Activated naive CD4-positive, alpha-beta T cell treated with anti-CD3 and anti-CD28 coated beads for 36 hours (primary cell): ENCODE measurements at regions of chr16 and their contacts with region 1.

Region 1: DNA sequence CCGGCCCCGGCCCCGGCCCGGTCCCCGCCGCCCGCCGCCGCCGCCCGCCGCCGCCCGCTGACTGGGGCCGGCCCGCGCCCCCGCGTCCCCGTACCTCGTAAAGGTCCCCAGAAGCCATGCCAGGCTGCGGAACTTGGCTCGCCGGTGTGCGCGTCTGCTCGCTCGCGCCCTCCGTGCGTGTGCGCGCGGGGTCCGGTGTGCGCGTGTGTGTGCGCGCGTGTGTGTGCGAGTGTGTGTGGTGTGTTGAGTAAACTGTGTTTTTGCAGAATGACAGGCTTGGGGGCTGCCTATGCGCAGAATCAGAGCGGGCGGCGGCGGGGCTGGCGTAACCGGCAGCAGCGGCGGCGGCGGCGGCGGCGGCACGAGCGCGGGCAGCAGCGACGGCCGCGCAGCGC is 345 bp downstream of the CDYL2 start:
- DNase-seq: peak; percentile 63
- H3K4me3 Mint-ChIP-seq: peak overlapping the region; percentile 88
- H3K27ac Mint-ChIP-seq: peak overlapping the region; percentile 80
- H3K4me1 Mint-ChIP-seq: peaks cover 31% of the 10 kb centered on the region
- H3K27me3 Mint-ChIP-seq: peaks cover 4% of the 10 kb centered on the region

Region 2: DNA sequence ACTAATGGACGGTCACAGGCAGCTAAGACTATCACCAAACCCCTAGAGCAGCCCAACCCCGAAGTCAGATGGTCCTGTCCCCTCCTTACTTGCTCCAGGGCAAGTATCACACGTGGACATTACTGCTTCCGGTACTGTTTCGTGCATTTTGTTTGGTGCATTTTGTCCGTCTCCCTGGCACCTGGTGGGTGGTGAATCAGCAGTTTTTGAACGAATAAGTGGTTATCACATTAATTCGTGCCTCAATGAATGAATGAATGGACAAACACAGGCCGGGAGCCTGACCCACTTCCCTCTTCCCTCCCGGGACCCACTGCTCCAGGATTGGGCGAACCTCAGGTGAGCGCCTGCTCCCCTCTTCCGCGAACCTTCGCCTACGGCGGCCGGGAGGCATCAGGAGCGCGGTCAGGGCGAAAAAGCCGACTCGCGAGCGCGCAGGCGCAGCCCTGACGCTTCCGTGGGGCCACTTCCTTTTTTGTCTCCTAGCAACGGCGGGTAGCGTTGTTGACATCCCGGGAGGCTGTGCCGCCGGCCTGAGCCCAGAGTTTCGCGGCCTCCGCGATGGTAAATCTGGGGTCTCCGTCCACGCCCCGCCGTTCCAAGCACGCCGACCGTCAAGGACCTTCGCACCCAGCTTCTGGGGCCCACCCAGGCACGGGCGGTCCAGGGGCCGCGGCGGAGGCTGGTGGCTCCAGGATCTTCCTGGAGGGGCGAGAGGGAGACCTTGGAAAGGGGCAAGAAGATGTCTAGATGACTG is 263.4 kb before region 1 on chr16 and contains the start of gene DYNLRB2:
- CTCF ChIA-PET with region 1: no interaction called
- intact Hi-C with region 1: loop called (anchors 1 kb)
- DNase-seq: peak; percentile 94
- H3K4me3 Mint-ChIP-seq: peak within 1 kb of the TSS; percentile 95
- H3K27ac Mint-ChIP-seq: peak within 1 kb of the TSS; percentile 97
- H3K4me1 Mint-ChIP-seq: peaks cover 16% of the 10 kb centered on the region
- H3K27me3 Mint-ChIP-seq: no peaks in the 10 kb centered on the region
- total RNA-seq, gene DYNLRB2: not detected

Region 3: DNA sequence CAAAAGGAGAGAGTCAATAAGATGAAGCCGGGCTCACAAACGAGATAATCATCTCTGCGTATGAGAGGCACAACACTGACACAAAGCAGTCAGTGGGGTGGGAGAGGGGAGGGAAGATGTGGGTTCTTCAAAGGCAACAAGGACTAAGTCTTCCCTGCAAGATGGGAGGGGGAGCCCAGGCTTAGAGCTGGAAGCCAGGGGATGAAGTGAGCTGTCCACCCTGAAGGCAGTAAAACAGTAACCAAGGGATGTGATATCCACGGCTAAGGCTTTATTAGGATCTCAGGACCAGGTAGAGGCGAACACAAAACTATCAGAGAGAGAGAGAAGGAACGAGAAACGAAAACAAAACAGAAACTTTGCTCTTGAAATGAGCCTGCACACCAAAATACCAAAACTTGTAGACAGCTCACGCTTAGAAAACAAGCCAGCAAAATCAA is 147.3 kb before region 1 on chr16:
- CTCF ChIA-PET with region 1: no interaction called
- intact Hi-C with region 1: loop called (anchors 2 kb)
- DNase-seq: peak; percentile 49
- H3K4me3 Mint-ChIP-seq: peak overlapping the region; percentile 73
- H3K27ac Mint-ChIP-seq: peak overlapping the region; percentile 68
- H3K4me1 Mint-ChIP-seq: peaks cover 20% of the 10 kb centered on the region
- H3K27me3 Mint-ChIP-seq: no peaks in the 10 kb centered on the region

Region 4: DNA sequence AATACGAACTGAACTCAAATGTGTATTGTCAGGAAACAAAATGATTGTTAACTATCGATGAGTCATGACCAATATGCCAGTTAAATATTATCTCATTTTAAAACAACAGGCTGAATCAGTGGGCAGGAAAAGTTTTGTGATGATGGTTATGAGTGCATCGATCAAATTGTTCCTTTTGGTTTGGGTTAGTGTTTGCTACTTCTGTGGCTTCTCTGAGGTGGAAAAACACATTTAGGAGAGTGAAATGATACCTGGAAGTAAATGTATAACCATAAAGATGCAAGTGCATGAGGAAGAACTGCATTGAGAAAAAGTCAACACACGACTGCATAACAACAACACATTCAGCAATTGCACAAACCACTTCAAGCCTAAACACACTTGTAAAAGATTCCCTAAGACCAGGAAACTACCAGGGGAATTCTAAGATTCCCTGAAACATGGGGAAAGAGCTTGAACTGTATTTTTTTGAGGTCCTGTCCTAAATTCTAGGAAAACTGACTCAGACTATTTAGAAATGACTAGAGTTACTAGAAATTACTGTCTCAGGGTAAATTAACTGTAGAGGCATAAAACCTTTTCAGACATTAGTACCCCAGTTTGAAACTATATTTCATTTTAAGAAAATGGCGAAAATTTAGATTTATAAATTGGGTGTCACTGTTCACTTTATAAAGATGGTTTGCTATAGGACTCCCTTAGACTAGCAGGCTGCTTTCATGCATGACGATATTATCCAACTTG is 44.5 kb before region 1 on chr16:
- CTCF ChIA-PET with region 1: no interaction called
- intact Hi-C with region 1: loop called (anchors 1 kb)
- DNase-seq: no peak
- H3K4me3 Mint-ChIP-seq: no peak overlapping the region
- H3K27ac Mint-ChIP-seq: no peak overlapping the region
- H3K4me1 Mint-ChIP-seq: peaks cover 10% of the 10 kb centered on the region
- H3K27me3 Mint-ChIP-seq: no peaks in the 10 kb centered on the region

Region 5: DNA sequence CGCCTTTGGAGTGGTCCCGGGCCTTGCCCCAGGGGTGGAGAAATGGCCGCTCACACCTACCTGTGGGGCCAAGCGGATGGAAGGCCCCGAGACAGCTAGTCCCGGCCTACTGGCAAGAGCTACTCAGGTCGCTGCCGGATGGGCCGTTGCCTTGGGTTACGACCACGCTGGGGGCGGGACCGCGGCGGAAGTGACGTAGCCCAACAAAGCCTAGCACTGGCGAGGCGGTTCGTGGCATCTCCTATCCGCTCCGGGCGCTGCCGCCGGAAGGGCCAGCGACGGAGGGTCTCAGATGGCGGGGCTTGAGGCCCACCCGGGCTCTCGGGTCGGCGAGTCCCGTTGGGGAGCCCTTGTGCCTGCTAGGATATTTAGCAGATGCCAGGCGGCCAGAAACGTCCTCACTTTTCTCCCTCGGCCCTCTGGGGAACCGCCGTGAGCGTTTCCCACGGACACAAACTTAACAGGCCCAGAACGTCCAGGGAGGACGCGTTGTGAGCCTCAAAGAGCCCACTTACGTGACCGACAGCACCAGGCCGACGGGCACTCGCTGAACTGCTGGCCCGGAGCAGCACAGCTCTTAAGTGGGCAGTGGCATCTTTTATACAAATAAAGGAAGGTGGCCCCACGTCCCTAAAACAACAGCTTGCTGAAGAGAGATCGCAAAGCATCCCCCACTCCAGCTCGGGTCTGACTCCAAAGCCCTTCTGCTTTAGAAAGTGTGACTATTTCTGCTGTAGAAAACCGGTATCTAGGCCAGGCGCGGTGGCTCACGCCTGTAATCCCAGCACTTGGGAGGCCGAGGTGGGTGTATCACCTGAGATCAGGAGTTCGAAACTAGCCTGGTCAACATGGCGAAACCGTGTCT is 273.3 kb after region 1 on chr16 and contains the start of gene C16orf46:
- CTCF ChIA-PET with region 1: no interaction called
- intact Hi-C with region 1: loop called (anchors 2 kb)
- DNase-seq: peak; percentile 99
- H3K4me3 Mint-ChIP-seq: no peak within 1 kb of the TSS
- H3K27ac Mint-ChIP-seq: no peak within 1 kb of the TSS
- H3K4me1 Mint-ChIP-seq: peaks cover 4% of the 10 kb centered on the region
- H3K27me3 Mint-ChIP-seq: no peaks in the 10 kb centered on the region
- total RNA-seq, gene C16orf46: 0.74 TPM in 1 of 2 experiments, not detected in the other